Caco-2 (cell line): ENCODE measurements at regions of chr2 and their contacts with region 1.

Region 1: DNA sequence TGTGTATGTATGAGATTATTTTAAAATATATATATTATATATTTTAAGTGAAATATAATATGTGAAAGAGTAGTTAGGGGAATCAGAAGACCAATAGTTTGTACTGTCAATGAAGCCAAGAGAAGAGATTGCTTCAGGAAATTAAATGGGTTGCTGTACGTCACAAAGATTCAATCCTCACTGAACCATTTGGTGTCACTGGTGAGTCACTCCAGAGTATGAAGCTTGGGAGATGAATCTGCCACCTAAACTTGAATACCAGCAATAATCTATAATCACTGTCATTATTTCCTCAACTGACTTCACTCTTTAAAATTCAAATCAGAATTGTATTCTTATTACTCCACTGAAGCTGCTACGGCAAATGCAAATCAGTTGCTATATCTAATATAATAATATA is 41.9 kb upstream of the SCN9A start:
- DNase-seq: peak in 1 of 2 experiments; percentile 19
- H3K4me3 ChIP-seq: no peak overlapping the region
- H3K4me3 Mint-ChIP-seq: no peak overlapping the region
- H3K27ac Mint-ChIP-seq: no peak overlapping the region
- H3K4me1 ChIP-seq: no peaks in the 10 kb centered on the region
- H3K4me1 Mint-ChIP-seq: no peaks in the 10 kb centered on the region
- H3K27me3 ChIP-seq: no peaks in the 10 kb centered on the region
- H3K27me3 Mint-ChIP-seq: peaks cover 4% of the 10 kb centered on the region
- CTCF ChIP-seq: peak in 1 of 2 experiments; percentile 36

Region 2: DNA sequence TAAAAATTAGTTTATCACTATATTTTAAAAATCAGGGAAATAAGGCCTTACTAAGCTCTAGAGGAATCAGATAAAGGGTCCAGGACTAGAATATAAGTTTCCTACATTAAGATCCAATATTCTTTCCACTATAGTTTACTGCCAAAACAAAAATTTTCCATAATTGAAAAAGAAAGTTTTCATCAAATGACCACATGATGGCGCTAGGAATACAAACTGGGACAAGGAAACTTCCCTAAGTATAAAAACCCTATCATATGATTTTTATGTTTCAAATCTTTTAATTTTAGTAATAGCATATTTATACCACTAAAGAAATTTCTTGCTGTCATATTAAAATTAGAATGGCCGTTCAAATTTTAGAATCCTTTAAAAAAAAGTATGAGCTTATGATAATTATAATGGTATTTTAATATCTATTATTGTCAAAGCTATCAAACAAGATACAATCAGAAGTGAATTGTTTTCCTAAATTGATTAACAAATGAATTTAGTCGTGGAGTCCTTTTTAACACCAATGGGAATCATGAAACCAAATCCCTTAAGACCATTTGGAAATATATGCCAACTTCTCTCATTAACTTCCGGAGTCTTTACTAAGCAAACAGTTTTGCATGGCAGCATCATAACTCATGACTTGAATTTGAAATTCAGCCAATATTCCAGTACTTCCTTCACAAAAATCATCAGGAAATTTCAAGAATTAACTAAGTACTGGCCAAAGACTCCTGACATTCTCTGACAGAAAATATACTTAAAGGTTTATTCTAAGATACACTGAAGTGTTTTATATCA is 360.1 kb before region 1 on chr2:
- CTCF ChIA-PET with region 1: no interaction called
- POLR2A ChIA-PET with region 1: no interaction called
- intact Hi-C with region 1: loop called (anchors 10 kb)
- DNase-seq: peak in 1 of 2 experiments; percentile 5
- H3K4me3 ChIP-seq: no peak overlapping the region
- H3K4me3 Mint-ChIP-seq: no peak overlapping the region
- H3K27ac Mint-ChIP-seq: no peak overlapping the region
- H3K4me1 ChIP-seq: no peaks in the 10 kb centered on the region
- H3K4me1 Mint-ChIP-seq: no peaks in the 10 kb centered on the region
- H3K27me3 ChIP-seq: no peaks in the 10 kb centered on the region
- H3K27me3 Mint-ChIP-seq: peaks cover 4% of the 10 kb centered on the region
- CTCF ChIP-seq: peak; percentile 53 to 58

Region 3: DNA sequence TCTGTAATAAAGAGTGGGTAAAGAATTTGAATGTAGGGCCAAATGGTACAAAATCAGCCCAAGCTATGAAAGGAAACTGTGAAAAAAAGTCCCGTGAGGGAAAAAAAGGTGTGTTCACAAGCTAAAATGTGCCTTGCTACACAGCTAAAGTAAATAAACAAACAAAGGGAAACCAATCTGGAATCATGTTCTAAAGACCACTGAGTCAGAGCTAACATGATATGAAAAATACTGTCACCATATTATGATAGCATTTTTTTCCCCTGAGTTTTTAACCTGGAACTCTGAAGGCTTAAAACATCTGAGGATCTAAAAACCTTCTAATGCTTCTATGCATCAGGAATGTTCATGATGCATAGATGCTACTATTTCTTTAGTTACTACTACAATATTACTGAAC is 348.7 kb before region 1 on chr2:
- CTCF ChIA-PET with region 1: no interaction called
- POLR2A ChIA-PET with region 1: no interaction called
- intact Hi-C with region 1: no loop called
- DNase-seq: no peak
- H3K4me3 ChIP-seq: no peak overlapping the region
- H3K4me3 Mint-ChIP-seq: no peak overlapping the region
- H3K27ac Mint-ChIP-seq: no peak overlapping the region
- H3K4me1 ChIP-seq: no peaks in the 10 kb centered on the region
- H3K4me1 Mint-ChIP-seq: no peaks in the 10 kb centered on the region
- H3K27me3 ChIP-seq: no peaks in the 10 kb centered on the region
- H3K27me3 Mint-ChIP-seq: peaks cover 9% of the 10 kb centered on the region
- CTCF ChIP-seq: no peak

Region 4: DNA sequence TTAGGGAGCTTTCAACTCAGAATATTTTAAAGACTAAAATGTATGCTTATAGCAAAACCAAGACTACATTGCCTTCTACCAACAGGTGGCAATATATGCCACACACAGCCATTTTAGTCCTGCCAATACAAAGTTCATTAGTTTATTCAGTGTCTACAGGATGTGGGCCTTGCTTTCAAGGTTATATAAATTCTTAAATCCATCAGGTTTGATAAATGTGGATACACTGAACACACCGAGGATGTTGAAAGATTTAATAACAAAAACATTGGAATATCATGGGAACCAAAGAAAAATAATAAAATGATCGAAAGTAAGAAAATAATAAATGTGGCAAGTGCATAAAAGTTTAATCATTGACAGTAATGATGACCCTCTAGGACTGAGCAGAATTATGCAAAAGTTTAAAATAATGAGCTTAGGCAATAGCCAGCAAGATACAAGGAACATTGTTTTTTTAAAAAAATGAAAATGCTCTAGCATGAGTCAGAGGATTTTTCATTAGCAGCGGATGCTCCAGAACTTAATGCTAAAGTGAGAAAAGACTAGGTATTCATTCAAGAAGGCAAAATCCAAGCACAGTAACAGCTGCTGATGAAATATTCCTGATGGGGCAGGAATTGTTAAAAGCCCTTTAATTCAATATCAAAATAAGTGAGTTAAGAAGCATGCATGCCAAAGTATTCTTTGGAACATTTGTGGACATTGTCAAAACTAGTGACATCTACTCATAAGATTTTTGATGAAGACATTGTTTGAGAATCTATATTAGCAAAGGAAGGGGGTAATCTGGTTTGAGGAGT is 56.1 kb before region 1 on chr2:
- CTCF ChIA-PET with region 1: no interaction called
- POLR2A ChIA-PET with region 1: no interaction called
- intact Hi-C with region 1: loop called (anchors 1 kb)
- DNase-seq: peak in 1 of 2 experiments; percentile 17
- H3K4me3 ChIP-seq: no peak overlapping the region
- H3K4me3 Mint-ChIP-seq: no peak overlapping the region
- H3K27ac Mint-ChIP-seq: no peak overlapping the region
- H3K4me1 ChIP-seq: peaks cover 7% of the 10 kb centered on the region; the same call in 1 of the 2 replicates
- H3K4me1 Mint-ChIP-seq: peaks cover 6% of the 10 kb centered on the region
- H3K27me3 ChIP-seq: no peaks in the 10 kb centered on the region
- H3K27me3 Mint-ChIP-seq: no peaks in the 10 kb centered on the region
- CTCF ChIP-seq: peak; percentile 41 to 66

Region 5: DNA sequence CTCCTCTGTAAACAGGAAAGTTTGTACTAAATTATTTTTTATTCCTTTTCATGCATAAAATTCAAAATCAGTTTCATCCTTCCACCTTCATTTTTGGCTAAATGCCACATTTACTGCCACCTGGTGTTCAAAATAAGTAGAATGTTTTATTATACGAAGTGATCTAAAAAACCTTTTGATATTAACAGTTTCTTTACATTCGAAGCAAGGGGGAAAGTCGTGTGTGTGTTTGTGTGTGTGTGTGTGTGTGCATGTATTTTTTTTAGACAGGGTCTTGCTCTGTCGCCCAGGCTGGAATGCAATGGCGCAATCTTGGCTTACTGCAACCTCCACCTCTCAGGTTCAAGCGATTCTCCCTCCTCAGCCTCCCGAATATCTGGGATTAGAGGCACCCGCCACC is 32.9 kb before region 1 on chr2:
- CTCF ChIA-PET with region 1: no interaction called
- POLR2A ChIA-PET with region 1: no interaction called
- intact Hi-C with region 1: loop called (anchors 2 kb)
- DNase-seq: peak in 1 of 2 experiments; percentile 11
- H3K4me3 ChIP-seq: no peak overlapping the region
- H3K4me3 Mint-ChIP-seq: no peak overlapping the region
- H3K27ac Mint-ChIP-seq: no peak overlapping the region
- H3K4me1 ChIP-seq: no peaks in the 10 kb centered on the region
- H3K4me1 Mint-ChIP-seq: no peaks in the 10 kb centered on the region
- H3K27me3 ChIP-seq: no peaks in the 10 kb centered on the region
- H3K27me3 Mint-ChIP-seq: peaks cover 8% of the 10 kb centered on the region
- CTCF ChIP-seq: peak in 1 of 2 experiments; percentile 28

Region 6: DNA sequence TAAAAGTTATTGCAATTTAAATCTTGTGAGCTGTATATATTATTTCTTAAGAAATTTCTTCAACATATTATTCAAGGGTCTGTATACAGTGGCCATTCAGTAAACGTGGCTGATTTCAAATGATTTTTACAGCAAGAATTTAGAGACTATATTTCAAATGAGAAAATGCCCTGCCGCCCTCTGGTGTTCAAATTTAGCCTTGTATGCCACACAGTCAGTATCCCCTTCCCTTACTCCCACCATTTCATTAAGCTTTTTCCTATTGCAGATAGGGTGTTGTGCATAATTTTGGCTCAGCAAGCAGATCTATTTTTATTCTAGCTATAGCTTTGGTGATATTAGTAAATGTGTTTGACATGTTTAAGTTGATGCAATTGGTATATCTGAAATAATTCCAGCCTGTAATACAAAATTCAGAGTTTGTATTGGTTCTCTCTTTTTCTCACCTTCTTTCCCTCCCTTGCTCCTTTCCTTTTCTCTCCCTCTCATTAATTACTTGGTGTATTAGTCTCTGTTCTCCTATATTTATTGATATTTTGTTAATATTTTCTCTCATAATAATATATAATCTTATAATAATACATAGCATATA is 99.1 kb after region 1 on chr2:
- CTCF ChIA-PET with region 1: no interaction called
- POLR2A ChIA-PET with region 1: no interaction called
- intact Hi-C with region 1: loop called (anchors 1 kb)
- DNase-seq: peak; percentile 27 to 47
- H3K4me3 ChIP-seq: no peak overlapping the region
- H3K4me3 Mint-ChIP-seq: no peak overlapping the region
- H3K27ac Mint-ChIP-seq: no peak overlapping the region
- H3K4me1 ChIP-seq: no peaks in the 10 kb centered on the region
- H3K4me1 Mint-ChIP-seq: no peaks in the 10 kb centered on the region
- H3K27me3 ChIP-seq: no peaks in the 10 kb centered on the region
- H3K27me3 Mint-ChIP-seq: peaks cover 2% of the 10 kb centered on the region
- CTCF ChIP-seq: peak; percentile 66 to 72